Activated naive CD4-positive, alpha-beta T cell treated with anti-CD3 and anti-CD28 coated beads, Interleukin-2, amount 10 ng/mL, durations not matched to agents 7 days and 5 days (primary cell): ENCODE measurements at regions of chr5 and their contacts with region 1.

Region 1: GRCh38 chr5:36739751-36740221 is 133.4 kb downstream of the SLC1A3 start:
- DNase-seq: peak; percentile 85
- H3K4me3 Mint-ChIP-seq: no peak overlapping the region
- H3K27ac Mint-ChIP-seq: no peak overlapping the region
- H3K4me1 Mint-ChIP-seq: peaks cover 7% of the 10 kb centered on the region
- H3K27me3 Mint-ChIP-seq: peaks cover 34% of the 10 kb centered on the region

Region 2: GRCh38 chr5:36763454-36763853 is 23.7 kb after region 1 on chr5:
- CTCF ChIA-PET with region 1: no interaction called
- DNase-seq: no peak
- H3K4me3 Mint-ChIP-seq: no peak overlapping the region
- H3K27ac Mint-ChIP-seq: no peak overlapping the region
- H3K4me1 Mint-ChIP-seq: no peaks in the 10 kb centered on the region
- H3K27me3 Mint-ChIP-seq: peaks cover 5% of the 10 kb centered on the region

Region 3: GRCh38 chr5:36870399-36871040 is 130.7 kb after region 1 on chr5:
- CTCF ChIA-PET with region 1: interaction called, 12 read pairs
- DNase-seq: no peak
- H3K4me3 Mint-ChIP-seq: no peak overlapping the region
- H3K27ac Mint-ChIP-seq: no peak overlapping the region
- H3K4me1 Mint-ChIP-seq: peaks cover 35% of the 10 kb centered on the region
- H3K27me3 Mint-ChIP-seq: no peaks in the 10 kb centered on the region

Region 4: DNA sequence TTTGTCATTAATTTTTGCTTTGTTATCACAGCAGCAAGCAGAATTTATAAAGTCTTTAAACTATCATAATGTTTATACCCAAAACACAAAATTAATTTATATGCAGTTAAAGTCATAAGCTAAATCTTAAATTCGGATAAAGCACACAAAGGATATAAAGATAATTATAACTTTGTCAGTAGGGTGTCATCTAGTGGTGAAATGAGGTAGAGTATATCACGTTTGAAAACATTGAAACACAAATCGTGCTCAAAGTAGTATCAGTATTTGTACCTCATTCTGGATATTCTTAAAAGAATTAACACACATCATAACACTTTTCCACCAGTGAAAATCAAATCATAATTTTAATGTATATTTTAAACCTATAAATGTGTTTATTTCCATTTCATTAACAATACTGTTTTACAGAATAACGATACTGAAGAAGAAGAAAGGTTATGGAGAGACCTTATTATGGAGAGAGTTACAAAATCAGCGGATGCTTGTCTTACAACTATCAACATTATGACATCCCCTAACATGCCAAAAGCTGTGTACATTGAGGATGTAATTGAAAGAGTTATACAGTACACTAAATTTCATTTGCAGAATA is 266.3 kb after region 1 on chr5:
- CTCF ChIA-PET with region 1: interaction called, 41 read pairs
- DNase-seq: no peak
- H3K4me3 Mint-ChIP-seq: no peak overlapping the region
- H3K27ac Mint-ChIP-seq: no peak overlapping the region
- H3K4me1 Mint-ChIP-seq: no peaks in the 10 kb centered on the region
- H3K27me3 Mint-ChIP-seq: no peaks in the 10 kb centered on the region